BJ (cell line): ENCODE measurements at regions of chr6 and their contacts with region 1.

Region 1: DNA sequence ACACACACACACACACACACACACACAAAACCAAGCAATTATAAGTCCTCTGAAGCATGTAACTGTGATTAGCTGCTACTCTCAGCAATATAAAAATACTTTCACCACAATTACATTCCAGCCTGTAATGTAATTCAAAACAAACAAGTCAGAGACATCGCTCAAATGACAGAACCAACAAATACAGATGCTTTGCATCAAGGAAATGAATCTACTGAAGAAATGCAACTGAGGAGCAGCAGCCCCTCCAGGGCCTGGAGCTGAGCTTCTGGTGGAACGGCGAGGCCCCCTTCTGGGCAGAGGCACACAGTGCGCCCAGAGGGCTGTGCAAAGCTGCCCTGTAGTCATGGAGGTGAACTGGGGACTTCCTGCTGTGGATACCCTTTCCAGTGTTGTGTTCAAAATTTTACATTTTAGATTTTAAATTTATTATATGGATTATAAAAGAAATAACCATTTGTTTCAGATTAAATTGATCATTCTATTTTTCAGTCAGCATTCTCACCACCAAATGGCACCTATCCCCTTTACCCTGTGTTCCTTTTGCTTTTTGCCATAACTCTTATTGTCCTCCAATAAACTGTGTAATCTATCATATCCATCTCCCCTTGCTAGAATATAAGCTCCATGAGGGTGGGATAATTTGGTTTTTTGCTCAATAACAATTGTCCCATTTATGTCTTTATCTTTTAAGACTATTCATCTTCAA is 23.2 kb downstream of the ADAT2 start:
- DNase-seq: peak; percentile 66
- H3K4me3 ChIP-seq: no peak overlapping the region
- H3K27me3 ChIP-seq: no peaks in the 10 kb centered on the region
- CTCF ChIP-seq: peak; percentile 100

Region 2: GRCh38 chr6:142474531-142475289 is 952.6 kb before region 1 on chr6:
- CTCF ChIA-PET with region 1: interaction called, 12 read pairs
- POLR2A ChIA-PET with region 1: no interaction called
- DNase-seq: no peak
- H3K4me3 ChIP-seq: no peak overlapping the region
- H3K27me3 ChIP-seq: no peaks in the 10 kb centered on the region
- CTCF ChIP-seq: peak; percentile 49

Region 3: GRCh38 chr6:142692942-142693341 is 734.3 kb before region 1 on chr6:
- CTCF ChIA-PET with region 1: interaction called, 68 read pairs
- POLR2A ChIA-PET with region 1: no interaction called
- DNase-seq: peak; percentile 39
- H3K4me3 ChIP-seq: no peak overlapping the region
- H3K27me3 ChIP-seq: no peaks in the 10 kb centered on the region
- CTCF ChIP-seq: peak; percentile 90

Region 4: GRCh38 chr6:143158113-143158581 is 269.1 kb before region 1 on chr6:
- CTCF ChIA-PET with region 1: no interaction called
- POLR2A ChIA-PET with region 1: no interaction called
- DNase-seq: no peak
- H3K4me3 ChIP-seq: no peak overlapping the region
- H3K27me3 ChIP-seq: no peaks in the 10 kb centered on the region
- CTCF ChIP-seq: no peak

Region 5: DNA sequence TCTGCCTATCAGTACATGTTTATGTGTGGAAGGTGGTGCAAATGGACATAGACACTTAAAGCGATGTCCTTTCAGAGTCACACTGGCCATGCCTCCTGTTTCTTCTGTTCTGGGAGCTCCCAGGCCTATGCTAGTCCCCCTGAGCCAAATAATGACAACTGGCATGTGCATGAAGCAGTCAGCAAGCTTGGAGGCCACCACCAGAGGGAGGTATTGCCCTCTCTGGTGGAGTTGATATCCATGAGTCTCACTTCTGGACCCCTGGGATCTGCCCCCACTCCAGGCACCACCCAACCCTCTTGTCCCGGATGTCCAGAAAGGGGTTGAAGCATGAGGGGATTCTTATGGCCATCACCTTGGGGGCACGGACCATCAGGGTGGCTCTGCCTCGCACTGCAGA is 194.4 kb before region 1 on chr6:
- CTCF ChIA-PET with region 1: interaction called, 18 read pairs
- POLR2A ChIA-PET with region 1: no interaction called
- DNase-seq: no peak
- H3K4me3 ChIP-seq: no peak overlapping the region
- H3K27me3 ChIP-seq: no peaks in the 10 kb centered on the region
- CTCF ChIP-seq: peak; percentile 55

Region 6: DNA sequence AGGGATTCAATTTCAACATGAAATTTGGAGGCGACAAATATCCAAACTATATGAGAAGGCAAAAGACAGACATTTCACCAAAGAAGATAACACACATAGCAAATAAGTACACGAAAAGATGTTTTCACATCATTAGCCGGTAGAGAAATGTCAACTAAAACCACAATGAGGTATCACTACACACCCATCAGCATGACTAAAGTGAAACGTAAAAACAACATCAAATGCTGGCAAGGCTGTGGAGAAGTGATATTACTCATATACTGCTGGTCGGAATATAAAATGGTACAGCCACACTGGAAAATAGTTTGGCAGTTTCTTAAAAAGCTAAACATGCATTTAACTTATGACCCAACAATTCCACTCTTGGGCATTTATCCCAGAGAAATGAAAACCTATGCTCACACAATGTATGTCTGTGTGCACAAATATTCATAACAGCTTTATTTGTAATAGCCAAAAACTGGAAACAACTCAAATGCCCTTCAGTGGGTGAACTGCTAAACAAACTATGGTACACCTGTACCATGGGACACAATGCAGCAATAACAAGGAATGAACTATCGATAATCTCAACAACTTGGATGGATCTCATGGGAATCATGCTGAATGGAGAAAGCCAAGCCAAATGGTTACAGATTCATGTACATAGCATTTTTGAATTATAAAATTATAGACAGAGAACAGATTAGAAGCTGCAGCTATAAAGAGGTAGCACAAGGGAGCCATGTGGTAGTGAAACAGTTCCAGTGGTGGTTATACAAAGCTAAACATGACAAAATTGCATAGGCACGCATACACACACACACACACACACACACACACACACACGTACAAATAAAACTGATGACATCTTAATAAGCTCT is 14.7 kb after region 1 on chr6:
- CTCF ChIA-PET with region 1: interaction called, 17 read pairs
- POLR2A ChIA-PET with region 1: no interaction called
- DNase-seq: no peak
- H3K4me3 ChIP-seq: no peak overlapping the region
- H3K27me3 ChIP-seq: no peaks in the 10 kb centered on the region
- CTCF ChIP-seq: no peak